IMR-90 (cell line): ENCODE measurements at regions of chr16 and their contacts with region 1.

Region 1: DNA sequence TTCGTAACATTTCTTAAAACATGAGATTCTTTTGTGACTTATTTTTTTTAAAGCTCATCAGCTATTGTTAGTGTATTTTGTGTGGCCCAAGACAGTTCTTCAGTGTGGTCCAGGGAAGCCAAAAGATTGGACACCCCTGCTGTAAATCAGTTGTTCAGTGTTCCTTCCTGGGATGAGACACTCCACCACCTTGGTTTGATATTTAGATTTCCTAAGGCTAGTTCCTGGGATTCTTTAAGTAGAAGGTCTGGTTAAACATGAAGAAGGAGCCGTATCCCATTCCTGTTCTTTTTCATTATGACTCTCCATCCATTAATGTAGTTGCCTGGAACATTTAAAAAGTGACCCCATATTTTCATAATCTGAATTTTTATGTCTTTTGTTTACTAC is 37.7 kb downstream of the LCMT1 start:
- DNase-seq: no peak
- ATAC-seq: no peak
- H3K4me3 ChIP-seq: no peak overlapping the region
- H3K27ac ChIP-seq: no peak overlapping the region
- H3K4me1 ChIP-seq: peaks cover 2% of the 10 kb centered on the region; the same call in 1 of the 2 replicates
- H3K27me3 ChIP-seq: no peaks in the 10 kb centered on the region
- CTCF ChIP-seq: no peak
- POLR2A ChIP-seq: no peak
- RAD21 ChIP-seq: no peak

Region 2: GRCh38 chr16:25161753-25162367 is 12.7 kb after region 1 on chr16:
- CTCF ChIA-PET with region 1: interaction called, 3 read pairs
- POLR2A ChIA-PET with region 1: interaction called, 11 read pairs
- dilution Hi-C with region 1: no loop called
- in situ Hi-C with region 1: no loop called
- intact Hi-C with region 1: no loop called
- DNase-seq: no peak
- ATAC-seq: no peak
- H3K4me3 ChIP-seq: no peak overlapping the region
- H3K27ac ChIP-seq: no peak overlapping the region
- H3K4me1 ChIP-seq: no peaks in the 10 kb centered on the region
- H3K27me3 ChIP-seq: no peaks in the 10 kb centered on the region
- CTCF ChIP-seq: no peak
- POLR2A ChIP-seq: no peak
- RAD21 ChIP-seq: no peak

Region 3: GRCh38 chr16:25210758-25211157 is 61.6 kb after region 1 on chr16:
- CTCF ChIA-PET with region 1: no interaction called
- POLR2A ChIA-PET with region 1: no interaction called
- dilution Hi-C with region 1: no loop called
- in situ Hi-C with region 1: no loop called
- intact Hi-C with region 1: no loop called
- DNase-seq: peak; percentile 83
- ATAC-seq: peak; percentile 62
- H3K4me3 ChIP-seq: no peak overlapping the region
- H3K27ac ChIP-seq: no peak overlapping the region
- H3K4me1 ChIP-seq: no peaks in the 10 kb centered on the region
- H3K27me3 ChIP-seq: peaks cover 9% of the 10 kb centered on the region
- CTCF ChIP-seq: no peak
- POLR2A ChIP-seq: no peak
- RAD21 ChIP-seq: no peak